K562 (cell line): ENCODE measurements at regions of chr3 and their contacts with region 1.

Region 1: DNA sequence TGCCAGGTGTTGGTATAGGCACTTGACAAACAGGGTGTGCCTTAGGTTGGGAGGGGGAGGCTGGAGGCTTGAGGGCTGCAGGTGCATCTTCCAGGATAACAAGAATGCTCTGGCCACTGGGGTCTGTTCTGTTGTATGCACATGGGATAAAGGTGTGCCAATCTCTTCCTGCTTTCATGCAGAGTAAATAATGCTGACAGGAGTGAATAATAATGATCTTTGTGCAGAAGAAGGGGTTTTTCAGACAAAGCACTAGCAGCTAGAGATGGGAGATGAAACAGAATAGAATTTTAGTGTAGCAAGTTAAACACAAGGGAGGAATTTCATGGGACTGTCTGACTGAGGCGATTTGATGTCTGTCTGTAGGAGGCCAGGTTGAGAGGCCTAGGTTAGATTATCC is 1.9 kb upstream of the ROPN1 start:
- DNase-seq: no peak
- ATAC-seq: no peak
- H3K4me3 ChIP-seq: no peak overlapping the region
- H3K27ac ChIP-seq: no peak overlapping the region
- H3K4me1 ChIP-seq: no peaks in the 10 kb centered on the region
- H3K27me3 ChIP-seq: no peaks in the 10 kb centered on the region
- CTCF ChIP-seq: no peak
- EP300 ChIP-seq: no peak
- POLR2A ChIP-seq: no peak
- RAD21 ChIP-seq: no peak

Region 2: GRCh38 chr3:123853686-123854372 is 140.0 kb before region 1 on chr3:
- CTCF ChIA-PET with region 1: no interaction called
- POLR2A ChIA-PET with region 1: no interaction called
- in situ Hi-C with region 1: no loop called
- intact Hi-C with region 1: no loop called
- DNase-seq: no peak
- ATAC-seq: no peak
- H3K4me3 ChIP-seq: no peak overlapping the region
- H3K27ac ChIP-seq: no peak overlapping the region
- H3K4me1 ChIP-seq: no peaks in the 10 kb centered on the region
- H3K27me3 ChIP-seq: no peaks in the 10 kb centered on the region
- CTCF ChIP-seq: no peak
- EP300 ChIP-seq: no peak
- POLR2A ChIP-seq: no peak
- RAD21 ChIP-seq: no peak

Region 3: DNA sequence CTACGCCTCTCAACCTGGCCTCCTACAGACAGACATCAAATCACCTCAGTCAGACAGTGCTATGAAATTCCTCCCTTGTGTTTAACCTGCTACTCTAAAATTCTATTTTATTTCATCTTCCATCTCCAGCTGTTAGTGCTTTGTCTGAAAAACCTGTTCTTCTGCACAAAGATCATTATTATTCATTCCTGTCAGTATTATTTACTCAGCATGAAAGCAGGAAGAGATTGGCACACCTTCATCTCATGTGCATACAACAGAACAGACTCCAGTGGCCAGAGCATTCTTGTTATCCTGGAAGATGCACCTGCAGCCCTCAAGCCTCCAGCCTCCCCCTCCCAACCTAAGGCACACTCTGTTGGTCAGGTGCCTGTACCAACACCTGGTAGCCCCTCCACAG is 1973.3 kb after region 1 on chr3:
- CTCF ChIA-PET with region 1: no interaction called
- POLR2A ChIA-PET with region 1: no interaction called
- in situ Hi-C with region 1: loop called (anchors 5 kb)
- intact Hi-C with region 1: no loop called
- DNase-seq: no peak
- ATAC-seq: no peak
- H3K4me3 ChIP-seq: no peak overlapping the region
- H3K27ac ChIP-seq: no peak overlapping the region
- H3K4me1 ChIP-seq: no peaks in the 10 kb centered on the region
- H3K27me3 ChIP-seq: no peaks in the 10 kb centered on the region
- CTCF ChIP-seq: no peak
- EP300 ChIP-seq: no peak
- POLR2A ChIP-seq: no peak
- RAD21 ChIP-seq: no peak